IMR-90 (cell line): ENCODE measurements at regions of chr3 and their contacts with region 1.

Region 1: DNA sequence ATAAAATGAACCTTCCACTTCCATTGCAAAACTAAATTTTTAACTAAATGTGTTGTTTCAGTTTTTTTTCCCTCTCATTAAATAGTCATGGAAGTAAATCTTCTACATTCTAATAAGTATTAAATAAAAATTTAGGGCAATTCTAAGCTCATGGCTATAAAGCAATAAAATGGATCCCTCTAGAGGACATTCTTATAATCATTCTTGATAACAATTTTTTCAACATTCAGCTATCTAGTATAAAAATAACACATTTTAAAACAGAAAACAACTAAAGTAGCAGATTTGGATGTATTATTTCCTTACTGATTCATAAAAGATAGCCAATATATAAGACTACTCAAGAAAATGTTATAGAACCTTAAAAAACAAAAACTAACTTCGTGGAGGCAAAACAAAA is 393.1 kb downstream of the PLOD2 start:
- DNase-seq: no peak
- ATAC-seq: no peak
- H3K4me3 ChIP-seq: no peak overlapping the region
- H3K27ac ChIP-seq: no peak overlapping the region
- H3K4me1 ChIP-seq: no peaks in the 10 kb centered on the region
- H3K27me3 ChIP-seq: no peaks in the 10 kb centered on the region
- CTCF ChIP-seq: peak; percentile 17; the same call in 1 of the 2 replicates
- POLR2A ChIP-seq: no peak
- RAD21 ChIP-seq: 0 out of 2 replicates have a peak, but pooled peaks have one; percentile 18

Region 2: GRCh38 chr3:143895805-143896204 is 1872.1 kb before region 1 on chr3:
- CTCF ChIA-PET with region 1: no interaction called
- POLR2A ChIA-PET with region 1: no interaction called
- dilution Hi-C with region 1: no loop called
- in situ Hi-C with region 1: no loop called
- intact Hi-C with region 1: loop called (anchors 5 kb)
- DNase-seq: peak; percentile 2
- ATAC-seq: no peak
- H3K4me3 ChIP-seq: no peak overlapping the region
- H3K27ac ChIP-seq: no peak overlapping the region
- H3K4me1 ChIP-seq: no peaks in the 10 kb centered on the region
- H3K27me3 ChIP-seq: peaks cover 5% of the 10 kb centered on the region
- CTCF ChIP-seq: peak; percentile 50
- POLR2A ChIP-seq: no peak
- RAD21 ChIP-seq: peak; percentile 57

Region 3: GRCh38 chr3:145735624-145736023 is 32.3 kb before region 1 on chr3:
- CTCF ChIA-PET with region 1: no interaction called
- POLR2A ChIA-PET with region 1: no interaction called
- dilution Hi-C with region 1: no loop called
- in situ Hi-C with region 1: no loop called
- intact Hi-C with region 1: loop called (anchors 2 kb)
- DNase-seq: no peak
- ATAC-seq: no peak
- H3K4me3 ChIP-seq: no peak overlapping the region
- H3K27ac ChIP-seq: no peak overlapping the region
- H3K4me1 ChIP-seq: no peaks in the 10 kb centered on the region
- H3K27me3 ChIP-seq: no peaks in the 10 kb centered on the region
- CTCF ChIP-seq: no peak
- POLR2A ChIP-seq: no peak
- RAD21 ChIP-seq: no peak

Region 4: DNA sequence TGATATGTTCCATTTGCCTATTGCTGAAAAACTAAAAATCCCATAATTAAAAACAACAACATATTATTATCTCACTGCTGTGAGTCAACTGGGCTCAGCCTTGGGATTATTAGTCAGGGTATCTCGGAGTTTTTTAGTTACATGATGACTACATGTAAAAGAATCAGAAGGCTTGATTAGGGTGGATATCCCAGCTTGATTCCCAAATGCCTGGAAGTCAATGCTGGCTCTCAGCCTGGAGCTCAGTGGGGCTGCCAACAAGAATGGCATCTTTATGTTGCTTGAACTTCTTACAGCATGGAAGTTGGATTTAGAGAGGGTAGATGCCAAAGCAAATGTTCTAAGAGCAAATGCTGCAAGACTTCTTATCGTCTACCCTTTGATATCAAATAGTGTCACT is 114.5 kb after region 1 on chr3:
- CTCF ChIA-PET with region 1: no interaction called
- POLR2A ChIA-PET with region 1: no interaction called
- dilution Hi-C with region 1: no loop called
- in situ Hi-C with region 1: no loop called
- intact Hi-C with region 1: no loop called
- DNase-seq: no peak
- ATAC-seq: no peak
- H3K4me3 ChIP-seq: no peak overlapping the region
- H3K27ac ChIP-seq: no peak overlapping the region
- H3K4me1 ChIP-seq: no peaks in the 10 kb centered on the region
- H3K27me3 ChIP-seq: no peaks in the 10 kb centered on the region
- CTCF ChIP-seq: no peak
- POLR2A ChIP-seq: no peak
- RAD21 ChIP-seq: no peak